Heart left ventricle (tissue), 16 donors: ENCODE measurements at regions of chr7 and their contacts with region 1.

Region 1: GRCh38 chr7:909358-910329 is 33.3 kb downstream of the GET4 start:
- DNase-seq: peak; percentile 72 to 88 (median 78)
- ATAC-seq: peak; percentile 40 to 81 (median 70)
- H3K4me3 ChIP-seq: peak overlapping the region in 10 of 12 donors; percentile 8 to 54 (median 36)
- H3K27ac ChIP-seq: peak overlapping the region in 5 of 12 donors; percentile 32 to 81 (median 34)
- H3K4me1 ChIP-seq: peaks cover 0 to 29% (median 3%) of the 10 kb centered on the region in 12 donors
- H3K27me3 ChIP-seq: peaks cover 0 to 5% (median 0%) of the 10 kb centered on the region in 9 donors
- CTCF ChIP-seq: no peak
- POLR2A ChIP-seq: no peak

Region 2: DNA sequence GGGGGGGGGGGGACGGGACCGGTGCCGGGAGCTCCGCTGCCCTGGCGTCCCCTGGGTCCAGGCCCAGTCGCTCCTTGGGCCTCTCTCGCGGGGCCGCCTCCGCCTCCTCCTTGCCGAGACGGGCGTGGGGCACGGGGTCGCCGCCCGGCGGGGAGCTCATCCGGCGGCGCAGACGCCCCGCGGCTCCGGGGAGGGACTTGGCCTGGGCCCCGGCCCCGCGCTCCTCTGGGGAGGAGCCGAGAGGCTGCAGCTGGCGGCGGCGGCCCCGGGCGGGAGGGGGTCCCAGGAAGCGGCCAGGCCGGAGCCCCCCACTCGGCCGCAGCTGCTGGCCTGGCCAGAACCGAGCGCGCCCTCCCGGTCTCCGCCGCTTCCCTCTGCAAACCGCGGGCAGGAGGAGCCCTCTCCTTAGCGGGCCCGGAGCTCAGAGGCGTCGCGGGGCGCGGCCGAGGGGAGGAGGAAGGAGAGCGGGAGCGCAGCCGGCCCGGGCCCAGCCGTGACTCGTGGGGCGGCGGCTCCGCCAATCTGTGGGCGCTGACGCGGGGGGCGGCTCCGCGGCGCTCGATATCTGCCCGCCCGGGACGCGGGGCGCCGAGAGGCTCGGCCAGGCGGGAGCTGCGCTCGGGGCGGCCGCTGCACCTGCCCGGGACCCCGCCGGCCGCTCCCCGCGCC is 717.5 kb before region 1 on chr7 and contains the start of gene FAM20C:
- intact Hi-C with region 1: no loop called
- DNase-seq: peak; percentile 88 to 94 (median 89)
- ATAC-seq: peak; percentile 77 to 89 (median 87)
- H3K4me3 ChIP-seq: peak within 1 kb of the TSS; percentile 59 to 96 (median 74)
- H3K27ac ChIP-seq: peak within 1 kb of the TSS; percentile 68 to 96 (median 91)
- H3K4me1 ChIP-seq: peaks cover 0 to 53% (median 29%) of the 10 kb centered on the region in 12 donors
- H3K27me3 ChIP-seq: peaks cover 0 to 7% (median 0%) of the 10 kb centered on the region in 9 donors
- CTCF ChIP-seq: peak in 1 of 12 donors; percentile 5
- POLR2A ChIP-seq: peak; percentile 80 to 91
- total RNA-seq, gene FAM20C: 16.7 to 52.0 (median 21.0) TPM

Region 3: GRCh38 chr7:945556-946255 is 36.1 kb after region 1 on chr7:
- intact Hi-C with region 1: loop called in 3 of 10 experiments (anchors 5 to 10 kb)
- DNase-seq: peak in 3 of 5 donors; percentile 17 to 55 (median 25)
- ATAC-seq: peak in 2 of 4 donors; percentile 18 to 45
- H3K4me3 ChIP-seq: no peak overlapping the region
- H3K27ac ChIP-seq: no peak overlapping the region
- H3K4me1 ChIP-seq: peaks cover 0 to 17% (median 0%) of the 10 kb centered on the region in 12 donors
- H3K27me3 ChIP-seq: peaks cover 0 to 6% (median 0%) of the 10 kb centered on the region in 9 donors
- CTCF ChIP-seq: no peak
- POLR2A ChIP-seq: no peak

Region 4: GRCh38 chr7:954330-955238 is 44.9 kb after region 1 on chr7 and contains the start of gene ADAP1:
- intact Hi-C with region 1: loop called in 4 of 10 experiments (anchors 2 to 10 kb)
- DNase-seq: peak in 4 of 5 donors; percentile 45 to 78 (median 61)
- ATAC-seq: peak in 3 of 4 donors; percentile 50 to 62 (median 57)
- H3K4me3 ChIP-seq: peak within 1 kb of the TSS; percentile 34 to 73 (median 57)
- H3K27ac ChIP-seq: peak within 1 kb of the TSS in 6 of 12 donors; percentile 14 to 79 (median 42)
- H3K4me1 ChIP-seq: peaks cover 0 to 44% (median 9%) of the 10 kb centered on the region in 12 donors
- H3K27me3 ChIP-seq: peaks cover 0 to 27% (median 8%) of the 10 kb centered on the region in 9 donors
- CTCF ChIP-seq: peak in 5 of 12 donors; percentile 4 to 41 (median 16)
- POLR2A ChIP-seq: no peak
- total RNA-seq, gene ADAP1: 7.0 to 16.5 (median 12.0) TPM

Region 5: DNA sequence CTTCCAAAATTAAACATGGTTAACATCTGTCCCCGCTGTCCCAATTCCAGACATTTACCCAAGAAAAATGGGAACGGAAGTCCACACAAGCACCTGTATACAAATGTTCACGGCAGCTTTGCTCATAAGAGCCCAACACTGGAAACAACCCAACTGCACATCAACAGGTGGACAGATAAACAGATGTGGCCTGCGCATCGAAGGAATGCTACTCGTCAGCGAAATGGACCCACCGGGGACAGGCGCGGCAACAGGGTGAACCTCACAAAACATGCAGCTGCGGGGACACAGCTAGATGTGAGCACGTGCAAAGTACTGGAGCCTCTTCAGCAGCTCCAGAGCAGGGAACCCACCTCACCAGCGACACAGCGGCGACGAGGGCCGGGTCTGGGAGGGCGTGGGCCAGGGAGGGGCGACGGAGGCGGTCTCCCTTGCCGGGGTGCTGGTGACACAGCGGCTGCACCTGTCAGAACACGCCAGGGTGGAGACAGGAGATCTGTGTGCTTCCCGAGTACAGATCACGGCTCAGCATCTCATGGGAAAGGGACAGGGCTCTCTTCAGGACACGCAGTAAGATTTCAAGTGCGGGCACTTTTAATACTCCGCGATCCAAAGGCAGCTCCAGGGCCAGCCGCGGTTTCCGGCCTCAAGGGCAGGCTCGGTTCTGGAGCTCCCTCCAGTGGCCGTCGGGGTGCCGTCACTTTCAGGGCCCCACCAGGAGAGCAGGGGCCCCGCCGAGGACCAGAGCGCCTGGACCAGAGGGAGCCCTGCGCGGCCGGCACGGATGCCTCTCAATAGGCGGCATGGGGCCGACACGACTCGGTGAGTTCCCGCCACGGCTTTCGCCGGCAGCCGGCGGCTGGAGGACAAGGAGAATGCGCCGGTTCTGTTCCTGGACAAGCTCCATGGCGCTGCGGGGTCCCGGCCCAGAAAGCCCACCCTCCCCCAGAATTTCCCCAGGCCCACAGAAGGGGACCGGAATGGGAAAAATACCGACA is 155.9 kb after region 1 on chr7:
- intact Hi-C with region 1: loop called in 4 of 10 experiments (anchors 10 kb)
- DNase-seq: peak; percentile 84 to 93 (median 86)
- ATAC-seq: peak; percentile 81 to 97 (median 93)
- H3K4me3 ChIP-seq: peak overlapping the region in 10 of 12 donors; percentile 12 to 50 (median 26)
- H3K27ac ChIP-seq: no peak overlapping the region
- H3K4me1 ChIP-seq: peaks cover 2 to 22% (median 18%) of the 10 kb centered on the region in 12 donors
- H3K27me3 ChIP-seq: no peaks in the 10 kb centered on the region
- CTCF ChIP-seq: peak; percentile 89 to 99 (median 96)
- POLR2A ChIP-seq: peak in 1 of 2 donors; percentile 21

Region 6: GRCh38 chr7:1144269-1144771 is 234.7 kb after region 1 on chr7:
- intact Hi-C with region 1: loop called in 1 of 10 experiments (anchors 5 kb)
- DNase-seq: peak in 4 of 5 donors; percentile 56 to 80 (median 68)
- ATAC-seq: peak; percentile 71 to 96 (median 94)
- H3K4me3 ChIP-seq: no peak overlapping the region
- H3K27ac ChIP-seq: peak overlapping the region in 3 of 12 donors; percentile 7 to 49 (median 18)
- H3K4me1 ChIP-seq: peaks cover 0 to 9% (median 2%) of the 10 kb centered on the region in 12 donors
- H3K27me3 ChIP-seq: no peaks in the 10 kb centered on the region
- CTCF ChIP-seq: peak; percentile 13 to 60 (median 41)
- POLR2A ChIP-seq: no peak